RWPE1 (cell line): ENCODE measurements at regions of chr18 and their contacts with region 1.

Region 1: DNA sequence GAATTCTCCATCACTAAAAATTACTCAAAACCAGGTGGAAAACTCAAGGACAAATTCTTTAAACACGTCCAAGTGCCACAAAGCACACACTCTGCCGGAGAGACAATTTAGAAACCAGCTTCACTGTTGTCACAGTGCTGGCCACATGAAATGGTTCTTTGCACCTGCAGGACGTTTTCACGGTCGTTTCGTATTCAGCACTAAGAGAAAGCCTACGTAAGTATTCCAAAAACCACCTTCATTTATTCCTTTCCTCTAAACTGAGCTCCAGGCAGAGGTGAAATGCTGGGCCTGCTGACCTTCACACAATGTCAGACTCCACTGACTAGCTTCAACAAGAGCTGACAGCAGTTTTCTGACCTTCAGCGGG is 680 bp downstream of the ATP5F1A start:
- DNase-seq: no peak
- H3K27ac ChIP-seq: peak overlapping the region; percentile 89
- CTCF ChIP-seq: no peak

Region 2: DNA sequence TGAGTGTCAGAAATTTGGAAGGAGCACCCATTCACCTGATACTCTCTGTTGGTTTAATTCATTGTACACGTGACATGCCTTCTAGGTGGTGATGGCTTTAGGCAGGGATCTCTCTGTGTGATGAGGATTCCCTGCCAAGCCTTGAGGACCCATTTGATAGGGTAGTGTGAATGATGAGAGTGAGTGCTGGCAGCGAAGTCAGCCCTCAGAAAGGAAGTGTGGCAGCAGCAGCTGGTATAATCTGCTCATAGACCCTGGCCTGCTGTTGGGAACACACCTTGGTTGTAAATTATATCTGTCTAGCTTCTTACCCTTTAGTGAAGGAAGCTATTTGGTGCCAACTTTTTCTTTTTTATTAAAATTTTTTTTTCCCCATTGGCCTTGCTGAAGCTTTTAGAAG is 171.3 kb after region 1 on chr18:
- CTCF ChIA-PET with region 1: no interaction called
- POLR2A ChIA-PET with region 1: interaction called, 12 read pairs
- DNase-seq: no peak
- H3K27ac ChIP-seq: no peak overlapping the region
- CTCF ChIP-seq: no peak